ENCODE measurements at regions of chr11 and their contacts with region 1.

Region 1: DNA sequence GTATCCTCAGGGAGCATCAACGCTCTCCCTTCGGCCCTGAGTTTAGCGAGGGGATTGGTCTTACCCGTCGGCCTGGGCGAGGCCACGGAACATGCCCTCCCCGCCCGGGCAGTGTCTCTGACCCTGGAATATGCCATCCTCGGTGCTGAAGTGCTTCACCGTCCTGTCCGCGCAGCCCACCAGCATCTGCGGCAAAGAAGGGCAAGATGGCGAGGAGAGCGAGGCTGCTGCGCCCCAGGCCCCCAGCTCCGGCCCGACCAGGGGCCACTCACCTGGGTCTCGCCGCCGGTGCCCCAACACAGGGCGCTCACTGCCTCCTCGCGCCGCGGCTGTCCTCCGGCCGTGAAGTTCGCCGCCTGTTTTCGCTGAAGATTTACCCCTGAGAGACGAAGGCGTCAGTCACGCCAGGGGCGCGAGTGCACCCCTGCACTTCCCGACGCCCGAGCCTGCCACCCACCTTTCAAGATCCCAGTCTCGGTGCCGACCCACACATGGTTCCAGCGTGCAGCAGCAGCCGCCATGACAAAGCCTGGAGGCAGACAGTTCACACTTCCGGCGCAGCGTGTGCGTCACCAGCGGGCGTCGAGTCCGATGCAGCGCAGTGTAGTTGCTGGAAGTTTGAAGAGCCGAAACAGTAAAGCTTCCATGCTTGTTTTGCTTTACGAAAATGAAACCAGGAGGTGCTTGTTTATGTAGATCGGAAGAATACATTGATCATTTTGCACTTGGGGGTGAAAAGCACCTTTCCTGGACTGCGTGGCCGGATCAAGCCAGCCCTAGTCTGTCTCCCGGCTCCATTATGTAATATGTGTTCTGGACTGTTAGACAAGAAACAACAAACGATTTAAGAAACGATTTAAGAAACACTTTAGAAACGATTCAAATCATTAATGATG is at the start of gene WDR74:
- DNase-seq: peak; percentile 91 to 93
- H3K4me3 ChIP-seq: peak within 1 kb of the TSS; percentile 66 to 84
- H3K27ac ChIP-seq: peak within 1 kb of the TSS; percentile 91 to 95
- H3K4me1 ChIP-seq: peaks cover 0 to 33% (median 15%) of the 10 kb centered on the region in 4 donors
- H3K27me3 ChIP-seq: no peaks in the 10 kb centered on the region
- CTCF ChIP-seq: no peak

Region 2: DNA sequence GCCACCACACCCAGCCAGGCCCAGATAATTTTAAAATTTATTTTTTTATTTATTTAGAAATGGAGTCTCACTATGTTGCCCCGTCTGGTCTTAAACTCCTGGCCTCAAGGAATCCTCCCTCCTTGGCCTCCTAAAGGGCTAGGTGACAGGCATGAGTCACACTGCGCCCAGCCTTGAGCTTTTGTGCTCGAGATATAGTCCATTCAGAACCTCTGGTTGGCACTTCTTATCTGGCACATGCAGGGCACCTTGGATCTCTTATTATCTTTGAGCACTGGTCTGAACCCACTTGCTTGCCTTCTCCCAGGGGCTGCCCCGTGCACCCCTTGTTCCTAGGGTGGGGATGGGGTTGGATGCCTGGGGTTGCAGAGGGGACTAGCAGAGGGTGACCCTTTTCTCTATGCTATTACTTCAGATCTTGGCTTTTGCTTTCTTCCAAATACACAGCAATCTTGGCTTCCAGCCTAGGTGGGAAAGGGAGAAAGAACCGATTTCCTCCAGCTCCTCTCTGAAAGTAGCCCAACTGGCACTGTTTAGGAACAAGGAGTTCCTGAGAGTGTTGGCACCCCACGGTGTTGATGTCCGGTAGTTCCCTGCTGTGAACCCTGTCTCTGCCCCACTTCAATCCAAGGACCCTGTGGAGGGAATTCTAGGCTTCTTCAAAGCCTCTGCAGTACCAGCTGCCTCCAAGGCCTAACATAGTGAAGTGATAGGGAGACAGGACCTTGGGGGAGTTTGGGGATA is 40.1 kb after region 1 on chr11:
- intact Hi-C with region 1: loop called (anchors 2 kb)
- DNase-seq: peak; percentile 70 to 85
- H3K4me3 ChIP-seq: peak overlapping the region; percentile 78 to 94
- H3K27ac ChIP-seq: peak overlapping the region; percentile 95 to 99
- H3K4me1 ChIP-seq: peaks cover 0 to 48% (median 39%) of the 10 kb centered on the region in 4 donors
- H3K27me3 ChIP-seq: no peaks in the 10 kb centered on the region
- CTCF ChIP-seq: peak in 1 of 2 experiments; percentile 16

Region 3: GRCh38 chr11:62931499-62932278 is 92.4 kb after region 1 on chr11:
- intact Hi-C with region 1: no loop called
- DNase-seq: no peak
- H3K4me3 ChIP-seq: no peak overlapping the region
- H3K27ac ChIP-seq: no peak overlapping the region
- H3K4me1 ChIP-seq: peaks cover 0 to 5% (median under 1%) of the 10 kb centered on the region in 4 donors
- H3K27me3 ChIP-seq: peaks cover 0 to 22% of the 10 kb centered on the region in 2 donors
- CTCF ChIP-seq: no peak